Breast epithelium (tissue), 4 donors: ENCODE measurements at regions of chr20 and their contacts with region 1.

Region 1: GRCh38 chr20:9407805-9408421 is 106.5 kb upstream of the LAMP5 start:
- DNase-seq: peak; percentile 53 to 55
- H3K4me3 ChIP-seq: no peak overlapping the region
- H3K27ac ChIP-seq: no peak overlapping the region
- H3K4me1 ChIP-seq: no peaks in the 10 kb centered on the region
- H3K27me3 ChIP-seq: no peaks in the 10 kb centered on the region
- CTCF ChIP-seq: peak; percentile 78 to 85 (median 81)
- POLR2A ChIP-seq: no peak

Region 2: GRCh38 chr20:9323622-9324021 is 84.3 kb before region 1 on chr20:
- intact Hi-C with region 1: no loop called
- DNase-seq: no peak
- H3K4me3 ChIP-seq: no peak overlapping the region
- H3K27ac ChIP-seq: no peak overlapping the region
- H3K4me1 ChIP-seq: no peaks in the 10 kb centered on the region
- H3K27me3 ChIP-seq: no peaks in the 10 kb centered on the region
- CTCF ChIP-seq: no peak
- POLR2A ChIP-seq: no peak

Region 3: GRCh38 chr20:9609887-9610502 is 202.1 kb after region 1 on chr20:
- intact Hi-C with region 1: loop called (anchors 10 kb)
- DNase-seq: peak; percentile 27 to 57
- H3K4me3 ChIP-seq: no peak overlapping the region
- H3K27ac ChIP-seq: no peak overlapping the region
- H3K4me1 ChIP-seq: no peaks in the 10 kb centered on the region
- H3K27me3 ChIP-seq: no peaks in the 10 kb centered on the region
- CTCF ChIP-seq: peak; percentile 48 to 75 (median 55)
- POLR2A ChIP-seq: no peak